Heart right ventricle (tissue), 16 donors: ENCODE measurements at regions of chr7 and their contacts with region 1.

Region 1: DNA sequence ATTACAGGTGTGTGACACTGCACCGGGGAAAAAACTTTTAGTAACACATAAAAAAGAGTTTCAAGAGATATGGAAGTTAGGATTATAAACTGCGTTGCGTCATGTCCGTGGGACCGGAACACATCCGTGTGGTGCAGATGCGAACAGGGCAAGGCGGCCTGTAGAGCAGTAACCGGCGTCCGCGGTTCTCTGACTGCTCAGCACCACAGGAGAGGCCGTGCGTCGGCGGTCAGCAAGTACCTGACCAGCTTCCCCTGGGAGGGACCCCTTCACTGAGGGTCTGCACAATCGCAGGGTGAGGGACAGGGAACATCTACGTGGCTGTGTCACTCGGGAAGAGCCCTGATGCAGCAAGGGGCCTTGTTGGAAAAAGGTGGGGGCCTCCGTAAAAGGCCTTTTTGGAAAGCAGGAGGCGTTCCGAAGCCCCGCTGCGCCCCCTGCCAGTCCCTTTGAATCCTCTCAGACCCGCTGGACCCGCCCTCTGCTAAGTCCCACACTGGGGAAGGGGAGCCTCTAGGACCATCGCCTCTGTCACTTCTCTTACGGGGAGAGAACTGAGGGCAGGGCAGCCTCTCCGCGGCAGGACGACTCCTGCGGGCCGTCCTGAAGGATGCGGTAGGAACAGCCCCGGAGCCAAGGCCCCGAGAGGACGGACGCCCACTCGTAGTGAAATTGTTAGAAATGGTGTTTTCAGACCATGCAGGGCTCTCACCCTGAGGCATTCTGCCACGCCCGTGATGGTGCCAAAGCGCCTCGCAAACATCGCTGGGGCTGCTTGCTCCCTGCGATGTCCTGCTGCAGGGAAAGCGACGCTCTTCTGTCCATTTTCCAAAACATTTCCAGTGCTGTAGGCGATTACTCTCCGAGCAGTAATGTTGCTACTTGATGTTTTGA is 771.6 kb upstream of the COBL start:
- DNase-seq: peak in 1 of 2 donors; percentile 11
- ATAC-seq: peak in 3 of 8 donors; percentile 35 to 47 (median 38)
- H3K4me3 ChIP-seq: peak overlapping the region in 9 of 10 donors; percentile 2 to 38 (median 20)
- H3K27ac ChIP-seq: no peak overlapping the region
- H3K4me1 ChIP-seq: no peaks in the 10 kb centered on the region
- H3K27me3 ChIP-seq: peaks cover 0 to 25% (median 12%) of the 10 kb centered on the region in 7 donors
- CTCF ChIP-seq: peak in 1 of 9 donors; percentile 10

Region 2: GRCh38 chr7:52179934-52180333 is 91.7 kb after region 1 on chr7:
- intact Hi-C with region 1: no loop called
- DNase-seq: no peak
- ATAC-seq: no peak
- H3K4me3 ChIP-seq: no peak overlapping the region
- H3K27ac ChIP-seq: no peak overlapping the region
- H3K4me1 ChIP-seq: no peaks in the 10 kb centered on the region
- H3K27me3 ChIP-seq: no peaks in the 10 kb centered on the region
- CTCF ChIP-seq: no peak

Region 3: DNA sequence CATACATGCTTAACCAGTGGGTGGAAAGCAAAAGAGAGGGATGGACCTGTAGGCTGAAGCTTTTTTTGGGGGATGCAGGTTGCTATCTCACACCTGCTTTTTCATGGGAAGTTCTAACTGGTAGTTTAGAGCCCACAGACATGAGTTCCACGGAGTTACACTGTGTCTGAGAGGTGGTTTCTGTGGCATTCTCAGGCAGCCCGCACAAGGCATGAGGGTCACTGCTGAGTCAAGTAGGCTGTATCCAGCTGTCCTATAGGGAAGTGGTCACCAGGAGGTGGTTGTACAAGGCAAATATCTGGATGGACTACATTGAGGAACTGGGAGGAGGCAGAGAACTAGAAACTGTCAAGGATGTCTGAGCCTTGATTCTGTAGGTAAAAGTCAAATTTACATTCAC is 596.1 kb after region 1 on chr7:
- intact Hi-C with region 1: no loop called
- DNase-seq: no peak
- ATAC-seq: no peak
- H3K4me3 ChIP-seq: no peak overlapping the region
- H3K27ac ChIP-seq: no peak overlapping the region
- H3K4me1 ChIP-seq: no peaks in the 10 kb centered on the region
- H3K27me3 ChIP-seq: no peaks in the 10 kb centered on the region
- CTCF ChIP-seq: no peak

Region 4: DNA sequence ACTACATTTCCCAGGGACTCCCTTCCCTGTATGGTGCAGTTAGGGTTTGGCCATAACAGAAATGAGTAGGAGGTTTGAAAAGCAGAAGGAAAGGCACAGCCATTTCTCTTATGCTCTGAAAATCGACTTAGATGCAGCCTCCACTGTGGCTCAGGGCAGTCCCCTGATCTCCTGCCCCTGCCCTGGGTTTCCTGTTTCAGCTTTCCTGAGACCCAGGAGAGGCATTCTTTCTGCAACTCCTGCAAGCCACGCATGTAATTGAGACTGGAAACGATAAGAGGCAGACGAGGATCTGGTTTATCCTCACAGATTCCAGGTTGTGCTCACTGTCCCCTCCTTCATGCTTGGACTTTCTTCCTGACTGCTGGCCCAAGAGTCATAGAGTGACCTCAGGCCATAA is 1992.7 kb after region 1 on chr7:
- intact Hi-C with region 1: loop called in 1 of 10 experiments (anchors 10 kb)
- DNase-seq: no peak
- ATAC-seq: no peak
- H3K4me3 ChIP-seq: no peak overlapping the region
- H3K27ac ChIP-seq: no peak overlapping the region
- H3K4me1 ChIP-seq: no peaks in the 10 kb centered on the region
- H3K27me3 ChIP-seq: no peaks in the 10 kb centered on the region
- CTCF ChIP-seq: no peak